ENCODE measurements at regions of chr6 and their contacts with region 1.

Region 1: GRCh38 chr6:137486416-137486815 is 7.8 kb downstream of the OLIG3 start:
- DNase-seq: no peak
- H3K4me3 ChIP-seq: no peak overlapping the region
- H3K27ac ChIP-seq: no peak overlapping the region
- H3K4me1 ChIP-seq: peaks cover 0 to 19% (median 6%) of the 10 kb centered on the region in 4 donors
- H3K27me3 ChIP-seq: peaks cover 96% of the 10 kb centered on the region
- CTCF ChIP-seq: no peak
- EP300 ChIP-seq: no peak
- POLR2A ChIP-seq: no peak

Region 2: DNA sequence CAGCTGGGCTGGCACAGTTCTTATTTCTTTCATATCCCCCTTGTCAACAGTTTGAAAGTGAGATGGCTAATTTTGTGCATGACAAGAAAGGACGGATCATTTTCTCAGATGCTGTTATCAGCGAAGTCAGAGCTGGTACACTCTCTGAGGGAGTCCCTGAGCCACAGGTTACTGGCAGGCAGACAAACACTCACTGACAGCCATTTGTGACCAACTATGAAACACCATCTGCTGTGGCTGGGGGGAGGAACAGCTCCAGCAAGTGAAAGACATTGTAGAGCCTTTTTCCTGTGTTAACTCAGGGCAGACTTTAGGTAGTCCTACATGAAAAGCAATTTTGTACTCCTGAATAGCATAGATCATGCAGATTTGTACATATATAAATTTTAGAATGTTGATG is 14.4 kb before region 1 on chr6:
- in situ Hi-C with region 1: no loop called
- intact Hi-C with region 1: loop called (anchors 1 kb)
- DNase-seq: no peak
- H3K4me3 ChIP-seq: no peak overlapping the region
- H3K27ac ChIP-seq: no peak overlapping the region
- H3K4me1 ChIP-seq: no peaks in the 10 kb centered on the region
- H3K27me3 ChIP-seq: peaks cover 31% of the 10 kb centered on the region
- CTCF ChIP-seq: no peak
- EP300 ChIP-seq: no peak
- POLR2A ChIP-seq: no peak

Region 3: GRCh38 chr6:137581019-137581707 is 94.7 kb after region 1 on chr6:
- in situ Hi-C with region 1: no loop called
- intact Hi-C with region 1: no loop called
- DNase-seq: no peak
- H3K4me3 ChIP-seq: no peak overlapping the region
- H3K27ac ChIP-seq: no peak overlapping the region
- H3K4me1 ChIP-seq: peaks cover 0 to 16% (median 1%) of the 10 kb centered on the region in 4 donors
- H3K27me3 ChIP-seq: no peaks in the 10 kb centered on the region
- CTCF ChIP-seq: no peak
- EP300 ChIP-seq: no peak
- POLR2A ChIP-seq: no peak

Measured in transverse colon (tissue), 4 donors.